ENCODE measurements at regions of chr6 and their contacts with region 1.

Region 1: GRCh38 chr6:100099189-100100074 is 105.4 kb upstream of the MCHR2 start:
- DNase-seq: peak; percentile 24
- H3K27ac ChIP-seq: no peak overlapping the region
- CTCF ChIP-seq: peak; percentile 77

Region 2: GRCh38 chr6:99868074-99868702 is 231.2 kb before region 1 on chr6:
- CTCF ChIA-PET with region 1: interaction called, 31 read pairs
- POLR2A ChIA-PET with region 1: no interaction called
- DNase-seq: peak; percentile 53
- H3K27ac ChIP-seq: no peak overlapping the region
- CTCF ChIP-seq: peak; percentile 88

Region 3: GRCh38 chr6:100001915-100002388 is 97.5 kb before region 1 on chr6:
- CTCF ChIA-PET with region 1: interaction called, 13 read pairs
- POLR2A ChIA-PET with region 1: no interaction called
- DNase-seq: peak; percentile 44
- H3K27ac ChIP-seq: no peak overlapping the region
- CTCF ChIP-seq: peak; percentile 93

Region 4: GRCh38 chr6:100078509-100078908 is 20.9 kb before region 1 on chr6:
- CTCF ChIA-PET with region 1: interaction called, 11 read pairs
- POLR2A ChIA-PET with region 1: no interaction called
- DNase-seq: no peak
- H3K27ac ChIP-seq: no peak overlapping the region
- CTCF ChIP-seq: 0 out of 2 replicates have a peak, but pooled peaks have one; percentile 20

Region 5: GRCh38 chr6:100126790-100127484 is 27.5 kb after region 1 on chr6:
- CTCF ChIA-PET with region 1: no interaction called
- POLR2A ChIA-PET with region 1: no interaction called
- DNase-seq: no peak
- H3K27ac ChIP-seq: no peak overlapping the region
- CTCF ChIP-seq: no peak

Region 6: GRCh38 chr6:100237821-100238220 is 138.4 kb after region 1 on chr6:
- CTCF ChIA-PET with region 1: no interaction called
- POLR2A ChIA-PET with region 1: no interaction called
- DNase-seq: no peak
- H3K27ac ChIP-seq: no peak overlapping the region
- CTCF ChIP-seq: no peak